GM10248 (cell line): ENCODE measurements at regions of chr5 and their contacts with region 1.

Region 1: GRCh38 chr5:96673127-96673526 is 11.0 kb downstream of the CAST start:
- DNase-seq: no peak
- CTCF ChIP-seq: no peak

Region 2: GRCh38 chr5:96629774-96630173 is 43.4 kb before region 1 on chr5:
- CTCF ChIA-PET with region 1: no interaction called
- POLR2A ChIA-PET with region 1: no interaction called
- DNase-seq: no peak
- CTCF ChIP-seq: no peak

Region 3: GRCh38 chr5:96687812-96688453 is 14.8 kb after region 1 on chr5:
- CTCF ChIA-PET with region 1: interaction called, 12 read pairs
- POLR2A ChIA-PET with region 1: no interaction called
- DNase-seq: peak; percentile 46
- CTCF ChIP-seq: peak; percentile 54